Mammary epithelial cell (primary cell): ENCODE measurements at regions of chr2 and their contacts with region 1.

Region 1: GRCh38 chr2:9548506-9548905 is 7.1 kb downstream of the ADAM17 start:
- DNase-seq: peak; percentile 32
- H3K4me3 ChIP-seq: no peak overlapping the region
- H3K27ac ChIP-seq: no peak overlapping the region
- H3K4me1 ChIP-seq: peaks cover 20% of the 10 kb centered on the region
- H3K27me3 ChIP-seq: no peaks in the 10 kb centered on the region
- CTCF ChIP-seq: no peak

Region 2: GRCh38 chr2:9178904-9179571 is 369.5 kb before region 1 on chr2:
- CTCF ChIA-PET with region 1: no interaction called
- dilution Hi-C with region 1: no loop called
- in situ Hi-C with region 1: no loop called
- intact Hi-C with region 1: no loop called
- DNase-seq: peak; percentile 89
- H3K4me3 ChIP-seq: no peak overlapping the region
- H3K27ac ChIP-seq: peak overlapping the region; percentile 84
- H3K4me1 ChIP-seq: peaks cover 37% of the 10 kb centered on the region
- H3K27me3 ChIP-seq: no peaks in the 10 kb centered on the region
- CTCF ChIP-seq: no peak

Region 3: GRCh38 chr2:9415516-9416169 is 132.9 kb before region 1 on chr2:
- CTCF ChIA-PET with region 1: interaction called, 18 read pairs
- dilution Hi-C with region 1: no loop called
- in situ Hi-C with region 1: no loop called
- intact Hi-C with region 1: no loop called
- DNase-seq: no peak
- H3K4me3 ChIP-seq: no peak overlapping the region
- H3K27ac ChIP-seq: no peak overlapping the region
- H3K4me1 ChIP-seq: no peaks in the 10 kb centered on the region
- H3K27me3 ChIP-seq: no peaks in the 10 kb centered on the region
- CTCF ChIP-seq: no peak